ENCODE measurements at regions of chr7 and their contacts with region 1.

Region 1: GRCh38 chr7:37352974-37353948 is 95.4 kb downstream of the ELMO1 start:
- DNase-seq: peak; percentile 36 to 88 (median 68)
- ATAC-seq: peak; percentile 87
- H3K4me3 ChIP-seq: peak overlapping the region; percentile 64 to 75
- H3K4me3 Mint-ChIP-seq: peak overlapping the region; percentile 95
- H3K27ac ChIP-seq: peak overlapping the region; percentile 50 to 59
- H3K27ac Mint-ChIP-seq: peak overlapping the region; percentile 94
- H3K4me1 ChIP-seq: peaks cover 28% of the 10 kb centered on the region
- H3K4me1 Mint-ChIP-seq: peaks cover 75% of the 10 kb centered on the region
- H3K27me3 ChIP-seq: no peaks in the 10 kb centered on the region
- H3K27me3 Mint-ChIP-seq: no peaks in the 10 kb centered on the region
- CTCF ChIP-seq: peak; percentile 89

Region 2: GRCh38 chr7:36389371-36390198 is 963.7 kb before region 1 on chr7 and contains the start of gene ANLN:
- CTCF ChIA-PET with region 1: no interaction called
- POLR2A ChIA-PET with region 1: no interaction called
- intact Hi-C with region 1: loop called in 1 of 2 experiments (anchors 2 kb)
- DNase-seq: peak; percentile 67 to 93 (median 81)
- ATAC-seq: peak; percentile 94
- H3K4me3 ChIP-seq: peak within 1 kb of the TSS; percentile 76 to 80
- H3K4me3 Mint-ChIP-seq: peak within 1 kb of the TSS; percentile 84
- H3K27ac ChIP-seq: peak within 1 kb of the TSS in 1 of 2 experiments; percentile 74
- H3K27ac Mint-ChIP-seq: peak within 1 kb of the TSS; percentile 56
- H3K4me1 ChIP-seq: peaks cover 9% of the 10 kb centered on the region
- H3K4me1 Mint-ChIP-seq: peaks cover 20% of the 10 kb centered on the region
- H3K27me3 ChIP-seq: no peaks in the 10 kb centered on the region
- H3K27me3 Mint-ChIP-seq: no peaks in the 10 kb centered on the region
- CTCF ChIP-seq: no peak
- total RNA-seq, gene ANLN: 0.65 to 1.0 TPM

Region 3: GRCh38 chr7:37201003-37201875 is 152.0 kb before region 1 on chr7:
- CTCF ChIA-PET with region 1: interaction called, 26 read pairs
- POLR2A ChIA-PET with region 1: no interaction called
- intact Hi-C with region 1: loop called in 1 of 2 experiments (anchors 10 kb)
- DNase-seq: peak; percentile 6 to 65 (median 48)
- ATAC-seq: no peak
- H3K4me3 ChIP-seq: no peak overlapping the region
- H3K4me3 Mint-ChIP-seq: no peak overlapping the region
- H3K27ac ChIP-seq: no peak overlapping the region
- H3K27ac Mint-ChIP-seq: peak overlapping the region; percentile 34
- H3K4me1 ChIP-seq: no peaks in the 10 kb centered on the region
- H3K4me1 Mint-ChIP-seq: peaks cover 4% of the 10 kb centered on the region
- H3K27me3 ChIP-seq: no peaks in the 10 kb centered on the region
- H3K27me3 Mint-ChIP-seq: no peaks in the 10 kb centered on the region
- CTCF ChIP-seq: peak; percentile 45

Region 4: DNA sequence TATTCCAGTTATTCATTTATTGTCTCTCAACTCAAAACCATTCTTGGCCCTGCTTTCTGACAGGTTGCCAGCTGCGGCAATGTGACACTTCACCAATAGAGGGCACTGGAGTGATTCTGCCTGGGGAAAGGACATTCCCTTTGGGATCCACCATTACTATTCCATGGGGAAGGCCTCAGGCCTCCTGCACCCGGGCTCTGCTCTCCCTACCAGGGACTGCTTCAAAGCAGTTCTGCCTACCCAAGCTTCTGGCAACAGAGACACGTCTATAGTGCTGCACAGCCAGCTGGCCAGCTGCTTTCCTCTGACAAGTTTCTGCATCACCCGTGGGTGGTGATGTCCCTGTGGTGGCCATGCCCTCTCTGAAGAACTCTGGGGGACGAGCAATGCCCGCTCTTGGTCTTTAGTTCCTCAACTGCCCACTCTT is 68.4 kb before region 1 on chr7:
- CTCF ChIA-PET with region 1: interaction called, 19 read pairs
- POLR2A ChIA-PET with region 1: interaction called, 4 read pairs
- intact Hi-C with region 1: loop called (anchors 1 to 2 kb)
- DNase-seq: peak in 6 of 9 experiments; percentile 24 to 61 (median 50)
- ATAC-seq: peak; percentile 46
- H3K4me3 ChIP-seq: no peak overlapping the region
- H3K4me3 Mint-ChIP-seq: no peak overlapping the region
- H3K27ac ChIP-seq: no peak overlapping the region
- H3K27ac Mint-ChIP-seq: no peak overlapping the region
- H3K4me1 ChIP-seq: peaks cover 12% of the 10 kb centered on the region
- H3K4me1 Mint-ChIP-seq: peaks cover 39% of the 10 kb centered on the region
- H3K27me3 ChIP-seq: no peaks in the 10 kb centered on the region
- H3K27me3 Mint-ChIP-seq: no peaks in the 10 kb centered on the region
- CTCF ChIP-seq: peak; percentile 76

Region 5: DNA sequence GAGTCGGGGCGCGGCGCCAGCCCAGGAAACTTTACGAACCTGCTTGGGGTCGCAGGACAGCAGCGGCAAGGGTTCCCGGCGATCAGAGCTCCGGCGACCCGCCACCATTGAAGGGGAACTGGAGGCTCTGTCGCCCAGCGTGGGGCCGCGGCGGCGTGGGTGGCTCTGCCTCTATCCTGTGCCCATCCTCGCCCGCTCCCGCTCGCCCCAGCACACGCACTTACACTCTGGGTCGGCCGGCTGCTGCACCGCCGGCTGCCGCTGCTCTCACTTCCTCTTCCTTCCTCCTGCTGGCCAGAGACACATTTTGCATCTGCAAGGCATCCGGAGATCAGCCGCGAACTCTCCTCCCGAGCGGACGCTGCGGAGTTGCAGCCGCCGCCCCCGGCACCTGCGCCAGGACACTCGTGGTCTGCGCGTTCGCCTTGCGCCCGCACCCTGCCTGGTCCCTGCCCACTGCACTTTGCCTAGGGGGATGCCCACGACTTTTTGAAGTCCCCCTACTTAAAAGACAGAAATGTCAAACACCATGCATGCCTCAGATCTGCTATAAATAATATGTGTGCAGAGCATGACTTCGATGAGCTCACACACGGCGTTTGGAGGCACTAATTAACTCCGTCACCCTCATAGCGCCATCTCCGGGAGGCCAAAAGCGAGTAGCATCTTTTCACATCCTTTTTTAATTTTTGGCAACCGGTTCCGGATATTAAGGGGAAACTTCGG is 95.5 kb after region 1 on chr7 and contains the start of gene ELMO1:
- CTCF ChIA-PET with region 1: interaction called, 30 read pairs
- POLR2A ChIA-PET with region 1: interaction called, 54 read pairs
- intact Hi-C with region 1: loop called (anchors 1 to 2 kb)
- DNase-seq: peak; percentile 50 to 92 (median 76)
- ATAC-seq: peak; percentile 76
- H3K4me3 ChIP-seq: peak within 1 kb of the TSS; percentile 71 to 91
- H3K4me3 Mint-ChIP-seq: peak within 1 kb of the TSS; percentile 95
- H3K27ac ChIP-seq: peak within 1 kb of the TSS; percentile 86 to 87
- H3K27ac Mint-ChIP-seq: peak within 1 kb of the TSS; percentile 98
- H3K4me1 ChIP-seq: peaks cover 29% of the 10 kb centered on the region
- H3K4me1 Mint-ChIP-seq: peaks cover 48% of the 10 kb centered on the region
- H3K27me3 ChIP-seq: no peaks in the 10 kb centered on the region
- H3K27me3 Mint-ChIP-seq: no peaks in the 10 kb centered on the region
- CTCF ChIP-seq: peak; percentile 68
- total RNA-seq, gene ELMO1: 79.4 to 96.2 TPM

Region 6: DNA sequence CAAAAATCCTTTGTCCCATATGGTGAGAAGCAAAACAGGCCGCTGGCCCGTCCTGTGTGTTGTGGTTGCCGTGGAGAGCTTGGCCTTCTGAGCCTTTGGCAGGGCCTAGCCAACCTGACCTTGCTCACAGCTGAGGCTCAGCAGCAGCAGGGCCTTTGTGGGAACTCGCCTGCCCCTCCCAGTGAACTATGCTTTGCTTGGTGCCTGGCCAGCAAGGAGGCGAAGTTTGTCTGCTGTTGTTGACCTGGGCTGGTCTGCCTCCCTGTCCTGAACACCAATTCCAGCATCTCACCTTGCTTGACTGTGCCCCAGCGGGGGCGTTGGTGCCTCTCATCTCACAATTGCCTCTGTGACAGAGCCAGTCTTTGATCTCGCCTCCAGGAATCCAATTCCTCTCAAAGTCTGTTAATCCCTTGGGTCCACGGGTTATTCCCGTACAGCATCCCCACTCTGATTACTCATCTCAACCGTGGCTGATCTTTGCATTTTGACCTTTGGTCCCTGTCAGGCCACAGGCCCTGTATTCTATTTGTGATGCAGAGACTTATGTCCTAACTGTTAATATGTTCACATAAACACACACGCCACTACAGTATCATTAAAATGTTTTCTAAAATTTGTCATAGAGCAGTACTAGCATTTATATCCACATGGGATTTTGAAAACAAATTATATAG is 589.8 kb after region 1 on chr7:
- CTCF ChIA-PET with region 1: no interaction called
- POLR2A ChIA-PET with region 1: no interaction called
- intact Hi-C with region 1: no loop called
- DNase-seq: no peak
- ATAC-seq: no peak
- H3K4me3 ChIP-seq: no peak overlapping the region
- H3K4me3 Mint-ChIP-seq: no peak overlapping the region
- H3K27ac ChIP-seq: no peak overlapping the region
- H3K27ac Mint-ChIP-seq: no peak overlapping the region
- H3K4me1 ChIP-seq: no peaks in the 10 kb centered on the region
- H3K4me1 Mint-ChIP-seq: no peaks in the 10 kb centered on the region
- H3K27me3 ChIP-seq: no peaks in the 10 kb centered on the region
- H3K27me3 Mint-ChIP-seq: no peaks in the 10 kb centered on the region
- CTCF ChIP-seq: no peak